Sciatic nerve (tissue), 2 donors: ENCODE measurements at regions of chrX and their contacts with region 1.

Region 1: GRCh38 chrX:47413179-47413594 is 42.8 kb downstream of the ZNF157 start:
- DNase-seq: no peak
- ATAC-seq: no peak

Region 2: DNA sequence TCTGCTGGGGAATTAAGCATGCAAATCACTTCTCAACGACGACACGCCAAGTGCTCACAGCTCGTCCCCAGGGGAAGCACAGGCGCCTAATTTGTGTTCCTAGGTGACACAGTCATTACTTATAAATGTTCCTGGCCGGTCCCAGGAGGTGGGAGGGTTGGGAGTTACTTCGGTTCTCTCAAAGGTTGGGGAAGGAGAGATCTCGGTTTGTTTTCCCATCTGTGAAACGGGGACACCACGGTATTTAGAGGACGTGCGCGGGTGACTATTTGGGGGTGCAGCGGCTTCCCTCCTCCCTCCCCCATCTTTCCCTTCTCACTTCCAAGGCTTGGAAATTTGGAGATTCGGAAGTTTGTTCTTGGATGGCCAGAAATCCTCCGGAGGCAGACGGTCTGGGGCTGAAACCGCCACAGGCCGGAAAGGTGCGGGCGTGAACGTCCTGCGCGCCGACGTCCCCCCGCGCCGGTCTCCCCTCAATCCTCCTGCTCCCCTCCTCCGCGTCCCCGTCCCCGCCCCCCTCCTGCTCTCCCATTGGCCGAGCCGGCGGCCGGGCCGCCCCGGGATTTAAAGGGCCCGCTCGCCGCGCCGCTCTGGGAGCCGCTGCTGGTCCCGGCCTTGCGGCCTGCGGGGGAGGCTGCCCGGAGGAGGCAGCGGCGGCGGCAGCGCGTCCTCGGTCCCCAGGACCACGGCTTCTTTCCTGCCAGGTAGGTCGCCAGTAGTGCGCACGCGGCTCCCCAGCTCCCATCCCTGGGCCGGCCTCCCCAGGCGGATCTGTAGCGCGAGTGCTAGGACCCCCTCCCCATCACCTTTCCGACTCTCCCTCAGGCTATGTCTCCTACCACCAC is 1095.4 kb after region 1 on chrX and contains the start of gene PORCN:
- intact Hi-C with region 1: loop called (anchors 10 kb)
- DNase-seq: peak; percentile 90
- ATAC-seq: peak; percentile 95
- total RNA-seq, gene PORCN: 7.4 TPM